Activated T-helper 2 cell treated with anti-CD3 and anti-CD28 coated beads, Interferon-gamma antibody, Interleukin-2, Interleukin-4, amounts not matched to agents 10 μg/mL and 5 μg/mL and 100 μg/mL, durations not matched to agents 14 hours and 24 hours and 36 hours (primary cell): ENCODE measurements at regions of chr20 and their contacts with region 1.

Region 1: GRCh38 chr20:36754656-36755222 is 8.8 kb upstream of the NDRG3 start:
- DNase-seq: peak; percentile 31
- H3K4me3 Mint-ChIP-seq: no peak overlapping the region
- H3K27ac Mint-ChIP-seq: no peak overlapping the region
- H3K4me1 Mint-ChIP-seq: peaks cover 10% of the 10 kb centered on the region
- H3K27me3 Mint-ChIP-seq: no peaks in the 10 kb centered on the region

Region 2: DNA sequence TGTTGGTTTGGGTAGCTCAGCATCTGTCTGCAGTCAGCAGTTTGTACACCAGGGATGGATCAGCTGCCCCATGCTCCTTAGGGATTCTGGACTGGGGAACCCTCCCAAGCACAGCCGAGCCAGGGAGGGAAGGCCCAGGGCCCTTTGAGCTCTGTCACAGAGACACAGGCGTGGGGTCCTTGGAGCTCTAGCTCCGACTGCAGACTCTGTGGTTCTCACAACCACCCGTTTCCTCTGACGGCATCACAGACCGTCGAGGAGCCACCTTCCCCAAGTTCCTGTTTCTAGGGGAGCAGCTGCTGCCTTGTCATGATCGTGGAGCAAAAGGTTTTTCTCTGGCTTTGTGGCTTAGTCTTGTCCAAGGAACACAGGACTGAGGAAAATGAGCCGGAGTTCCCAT is 108.7 kb before region 1 on chr20 and contains the start of gene SLA2:
- intact Hi-C with region 1: loop called (anchors 10 kb)
- DNase-seq: peak; percentile 60
- H3K4me3 Mint-ChIP-seq: peak within 1 kb of the TSS; percentile 96
- H3K27ac Mint-ChIP-seq: peak within 1 kb of the TSS; percentile 99
- H3K4me1 Mint-ChIP-seq: peaks cover 50% of the 10 kb centered on the region
- H3K27me3 Mint-ChIP-seq: no peaks in the 10 kb centered on the region
- total RNA-seq, gene SLA2: 54.9 and 56.5 TPM in 2 replicates

Region 3: GRCh38 chr20:36720510-36720909 is 34.2 kb before region 1 on chr20:
- intact Hi-C with region 1: no loop called
- DNase-seq: no peak
- H3K4me3 Mint-ChIP-seq: no peak overlapping the region
- H3K27ac Mint-ChIP-seq: peak overlapping the region; percentile 12
- H3K4me1 Mint-ChIP-seq: peaks cover 5% of the 10 kb centered on the region
- H3K27me3 Mint-ChIP-seq: no peaks in the 10 kb centered on the region